WTC11 (cell line): ENCODE measurements at regions of chr1 and their contacts with region 1.

Region 1: GRCh38 chr1:208668991-208669390 is 424.8 kb upstream of the PLXNA2 start:
- DNase-seq: peak; percentile 16
- ATAC-seq: peak; percentile 69
- H3K4me3 Mint-ChIP-seq: no peak overlapping the region
- H3K27ac Mint-ChIP-seq: no peak overlapping the region
- H3K4me1 Mint-ChIP-seq: no peaks in the 10 kb centered on the region
- H3K27me3 Mint-ChIP-seq: no peaks in the 10 kb centered on the region
- CTCF ChIP-seq: no peak

Region 2: GRCh38 chr1:208374391-208374941 is 294.5 kb before region 1 on chr1:
- CTCF ChIA-PET with region 1: no interaction called
- POLR2A ChIA-PET with region 1: no interaction called
- DNase-seq: no peak
- ATAC-seq: peak; percentile 75
- H3K4me3 Mint-ChIP-seq: no peak overlapping the region
- H3K27ac Mint-ChIP-seq: no peak overlapping the region
- H3K4me1 Mint-ChIP-seq: peaks cover 14% of the 10 kb centered on the region
- H3K27me3 Mint-ChIP-seq: peaks cover 20% of the 10 kb centered on the region
- CTCF ChIP-seq: no peak

Region 3: DNA sequence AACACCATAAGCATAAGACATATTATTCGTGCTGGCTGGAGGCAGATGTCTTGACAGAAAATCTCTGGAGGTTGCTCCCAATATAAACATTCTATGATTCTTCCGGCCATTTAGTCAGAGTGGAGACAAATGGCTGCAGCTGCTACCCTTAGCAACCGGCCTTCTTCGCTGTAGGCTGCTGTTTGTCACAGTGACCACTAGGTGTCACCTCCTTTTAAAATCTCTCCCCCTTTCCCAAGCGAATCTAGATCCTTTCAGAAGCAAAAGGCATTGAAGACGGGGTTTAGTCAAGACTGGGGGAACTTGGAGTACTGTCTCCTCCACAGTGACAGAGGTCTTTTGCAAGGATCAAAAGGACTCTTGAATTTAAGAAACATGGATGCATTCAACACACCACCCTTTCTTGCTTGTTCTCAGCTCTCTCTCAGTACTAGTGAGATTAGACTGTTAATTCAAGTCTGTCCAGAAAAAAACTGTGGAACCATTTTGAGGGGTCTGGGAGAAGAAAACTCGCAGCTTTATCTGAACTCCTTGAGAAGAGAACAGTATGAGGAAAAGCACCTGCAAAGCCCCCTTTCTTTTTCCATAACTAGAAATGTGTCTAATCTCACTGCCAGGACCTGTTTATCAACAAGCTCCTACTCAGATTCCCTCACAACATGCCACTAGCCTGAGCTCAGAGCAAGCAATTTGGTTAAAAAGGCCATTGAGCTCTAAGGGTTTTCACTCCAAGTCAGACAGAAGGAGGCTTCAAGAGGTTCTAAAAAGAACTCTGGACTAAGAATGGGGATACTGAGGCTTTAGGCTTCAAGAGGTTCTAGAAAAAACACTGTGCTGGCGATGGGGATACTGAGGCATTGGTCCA is 16.5 kb before region 1 on chr1:
- CTCF ChIA-PET with region 1: interaction called, 14 read pairs
- POLR2A ChIA-PET with region 1: no interaction called
- DNase-seq: peak; percentile 52
- ATAC-seq: peak; percentile 95
- H3K4me3 Mint-ChIP-seq: no peak overlapping the region
- H3K27ac Mint-ChIP-seq: no peak overlapping the region
- H3K4me1 Mint-ChIP-seq: peaks cover 20% of the 10 kb centered on the region
- H3K27me3 Mint-ChIP-seq: no peaks in the 10 kb centered on the region; the same call in 1 of the 2 replicates
- CTCF ChIP-seq: peak; percentile 81

Region 4: GRCh38 chr1:208791456-208791855 is 122.5 kb after region 1 on chr1:
- CTCF ChIA-PET with region 1: no interaction called
- POLR2A ChIA-PET with region 1: no interaction called
- DNase-seq: no peak
- ATAC-seq: no peak
- H3K4me3 Mint-ChIP-seq: no peak overlapping the region
- H3K27ac Mint-ChIP-seq: no peak overlapping the region
- H3K4me1 Mint-ChIP-seq: peaks cover 39% of the 10 kb centered on the region
- H3K27me3 Mint-ChIP-seq: no peaks in the 10 kb centered on the region; the same call in 1 of the 2 replicates
- CTCF ChIP-seq: no peak